ENCODE measurements at regions of chr1 and their contacts with region 1.

Region 1: DNA sequence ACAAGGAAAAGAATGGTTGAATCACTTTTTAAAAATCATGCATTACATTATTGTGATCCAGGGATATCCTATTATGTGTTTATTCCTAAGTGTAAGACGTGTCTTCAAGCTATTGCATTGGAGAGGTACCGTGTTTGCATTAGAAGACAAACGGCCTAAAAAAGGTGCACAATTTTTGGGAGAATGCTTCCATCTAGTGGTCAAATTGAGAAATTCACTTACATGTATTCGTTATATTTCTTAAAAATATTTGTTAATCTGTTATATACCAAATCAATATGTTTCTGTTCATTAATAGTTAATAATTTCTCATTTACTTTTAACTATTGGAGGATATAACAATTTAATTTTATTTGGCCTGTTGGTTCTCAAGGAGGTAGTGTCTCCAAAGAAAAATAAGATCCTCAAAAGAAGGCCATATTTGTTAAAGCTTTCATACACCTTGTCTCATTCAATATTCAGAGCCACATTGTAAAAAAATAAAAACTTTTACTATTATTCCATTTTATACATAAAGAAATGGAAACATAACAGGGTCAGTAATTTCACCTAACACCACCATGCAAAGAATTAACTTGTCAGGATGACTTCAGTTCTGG is 40.5 kb upstream of the KCTD3 start:
- H3K4me3 ChIP-seq: no peak overlapping the region
- H3K27ac ChIP-seq: no peak overlapping the region
- H3K4me1 ChIP-seq: no peaks in the 10 kb centered on the region
- CTCF ChIP-seq: no peak

Region 2: DNA sequence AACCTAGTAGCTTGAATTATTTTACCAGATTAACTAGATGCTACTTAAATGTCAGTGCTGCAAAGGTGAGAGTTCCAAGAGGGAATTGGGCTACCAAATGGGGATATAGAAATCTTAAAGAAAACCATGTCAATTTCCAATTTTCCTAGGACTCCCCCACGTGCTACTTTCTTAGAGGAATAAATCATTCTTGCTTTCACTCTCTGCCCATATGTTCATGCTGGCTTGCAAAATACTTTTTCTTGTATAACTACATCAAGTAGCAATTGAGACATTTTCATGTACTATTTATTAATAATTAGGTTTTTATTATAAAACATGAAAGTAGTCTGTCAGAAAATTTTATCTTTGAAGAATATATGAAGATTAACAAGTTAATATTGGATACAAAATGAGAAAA is 432.3 kb before region 1 on chr1:
- CTCF ChIA-PET with region 1: no interaction called
- POLR2A ChIA-PET with region 1: no interaction called
- H3K4me3 ChIP-seq: no peak overlapping the region
- H3K27ac ChIP-seq: no peak overlapping the region
- H3K4me1 ChIP-seq: no peaks in the 10 kb centered on the region
- CTCF ChIP-seq: no peak

Region 3: GRCh38 chr1:215539803-215540592 is 13.3 kb after region 1 on chr1:
- CTCF ChIA-PET with region 1: interaction called, 20 read pairs
- POLR2A ChIA-PET with region 1: no interaction called
- H3K4me3 ChIP-seq: no peak overlapping the region
- H3K27ac ChIP-seq: no peak overlapping the region
- H3K4me1 ChIP-seq: peaks cover 11% of the 10 kb centered on the region
- CTCF ChIP-seq: no peak

Measured in HEK293 (cell line).